ENCODE measurements at regions of chr9 and their contacts with region 1.

Region 1: DNA sequence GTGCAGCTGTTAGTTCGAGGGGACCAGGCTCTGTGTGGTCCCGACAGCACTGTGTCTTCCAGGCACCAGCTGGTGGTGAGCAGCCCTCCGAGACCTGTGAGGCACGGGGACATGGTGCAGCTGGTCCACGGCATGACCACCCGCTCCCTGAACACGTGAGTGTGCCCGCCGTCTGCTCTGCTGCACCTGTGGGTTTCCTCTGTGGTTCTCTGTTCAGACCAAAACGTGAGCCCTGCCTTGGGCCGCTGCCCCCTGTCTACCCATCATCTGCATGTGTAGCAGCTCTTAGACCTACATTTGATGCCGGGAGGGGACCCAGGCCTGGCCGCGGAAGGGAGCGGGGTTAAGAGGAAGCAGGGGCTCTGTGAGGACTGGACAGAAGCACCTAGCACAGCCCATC is 10.5 kb downstream of the POMT1 start:
- DNase-seq: no peak
- H3K4me3 ChIP-seq: no peak overlapping the region
- H3K27ac ChIP-seq: no peak overlapping the region
- H3K4me1 ChIP-seq: no peaks in the 10 kb centered on the region
- H3K27me3 ChIP-seq: no peaks in the 10 kb centered on the region
- CTCF ChIP-seq: no peak
- EP300 ChIP-seq: no peak
- POLR2A ChIP-seq: no peak

Region 2: GRCh38 chr9:131167146-131167692 is 346.0 kb before region 1 on chr9:
- intact Hi-C with region 1: loop called in 1 of 4 experiments (anchors 5 kb)
- DNase-seq: no peak
- H3K4me3 ChIP-seq: no peak overlapping the region
- H3K27ac ChIP-seq: no peak overlapping the region
- H3K4me1 ChIP-seq: no peaks in the 10 kb centered on the region
- H3K27me3 ChIP-seq: no peaks in the 10 kb centered on the region
- CTCF ChIP-seq: no peak
- EP300 ChIP-seq: no peak
- POLR2A ChIP-seq: no peak

Region 3: DNA sequence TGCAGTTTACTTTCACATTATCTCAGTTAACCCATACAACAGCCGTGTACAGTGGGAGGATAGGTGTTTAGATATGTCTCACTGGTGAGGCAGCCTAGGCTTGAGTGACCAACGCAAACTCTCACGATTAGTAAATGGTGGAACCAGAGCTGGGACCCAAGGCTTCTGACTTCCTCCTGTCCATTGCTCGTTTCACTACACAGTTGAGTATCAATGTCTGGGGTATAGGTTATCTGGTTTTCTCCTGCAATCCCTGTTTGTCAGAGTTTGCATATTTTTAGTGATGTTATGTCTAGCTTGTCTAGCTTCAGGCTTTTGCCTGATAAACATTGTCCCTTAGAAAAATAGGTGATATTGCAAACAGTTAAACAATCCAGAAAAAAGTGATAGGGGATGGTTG is 325.2 kb before region 1 on chr9:
- intact Hi-C with region 1: no loop called
- DNase-seq: no peak
- H3K4me3 ChIP-seq: no peak overlapping the region
- H3K27ac ChIP-seq: no peak overlapping the region
- H3K4me1 ChIP-seq: no peaks in the 10 kb centered on the region
- H3K27me3 ChIP-seq: no peaks in the 10 kb centered on the region
- CTCF ChIP-seq: no peak
- EP300 ChIP-seq: no peak
- POLR2A ChIP-seq: no peak

Region 4: GRCh38 chr9:132135456-132135855 is 622.3 kb after region 1 on chr9:
- intact Hi-C with region 1: no loop called
- DNase-seq: no peak
- H3K4me3 ChIP-seq: no peak overlapping the region
- H3K27ac ChIP-seq: no peak overlapping the region
- H3K4me1 ChIP-seq: no peaks in the 10 kb centered on the region
- H3K27me3 ChIP-seq: no peaks in the 10 kb centered on the region
- CTCF ChIP-seq: no peak
- EP300 ChIP-seq: no peak
- POLR2A ChIP-seq: no peak

Measured in ovary (tissue), 10 donors.